ENCODE measurements at regions of chr11 and their contacts with region 1.

Region 1: GRCh38 chr11:106724293-106724892 is 293.9 kb downstream of the GUCY1A2 start:
- DNase-seq: peak in 1 of 4 donors; percentile 14
- ATAC-seq: peak; percentile 86
- H3K4me3 ChIP-seq: no peak overlapping the region
- H3K27ac ChIP-seq: no peak overlapping the region
- H3K4me1 ChIP-seq: no peaks in the 10 kb centered on the region
- H3K27me3 ChIP-seq: no peaks in the 10 kb centered on the region
- CTCF ChIP-seq: no peak

Region 2: GRCh38 chr11:107043242-107044006 is 319.0 kb after region 1 on chr11:
- intact Hi-C with region 1: loop called in 1 of 2 experiments (anchors 10 kb)
- DNase-seq: no peak
- ATAC-seq: peak; percentile 65
- H3K4me3 ChIP-seq: no peak overlapping the region
- H3K27ac ChIP-seq: no peak overlapping the region
- H3K4me1 ChIP-seq: no peaks in the 10 kb centered on the region
- H3K27me3 ChIP-seq: no peaks in the 10 kb centered on the region
- CTCF ChIP-seq: no peak